Vagina (tissue), 2 donors: ENCODE measurements at regions of chr15 and their contacts with region 1.

Region 1: GRCh38 chr15:59372352-59373211 is at the start of gene MYO1E:
- DNase-seq: peak in 1 of 2 donors; percentile 98
- H3K4me3 ChIP-seq: peak within 1 kb of the TSS; percentile 60 to 88
- H3K27ac ChIP-seq: peak within 1 kb of the TSS; percentile 96
- H3K4me1 ChIP-seq: peaks cover 34% of the 10 kb centered on the region
- H3K27me3 ChIP-seq: no peaks in the 10 kb centered on the region
- CTCF ChIP-seq: no peak
- POLR2A ChIP-seq: peak; percentile 55 to 59
- total RNA-seq, gene MYO1E: 16.9 TPM

Region 2: DNA sequence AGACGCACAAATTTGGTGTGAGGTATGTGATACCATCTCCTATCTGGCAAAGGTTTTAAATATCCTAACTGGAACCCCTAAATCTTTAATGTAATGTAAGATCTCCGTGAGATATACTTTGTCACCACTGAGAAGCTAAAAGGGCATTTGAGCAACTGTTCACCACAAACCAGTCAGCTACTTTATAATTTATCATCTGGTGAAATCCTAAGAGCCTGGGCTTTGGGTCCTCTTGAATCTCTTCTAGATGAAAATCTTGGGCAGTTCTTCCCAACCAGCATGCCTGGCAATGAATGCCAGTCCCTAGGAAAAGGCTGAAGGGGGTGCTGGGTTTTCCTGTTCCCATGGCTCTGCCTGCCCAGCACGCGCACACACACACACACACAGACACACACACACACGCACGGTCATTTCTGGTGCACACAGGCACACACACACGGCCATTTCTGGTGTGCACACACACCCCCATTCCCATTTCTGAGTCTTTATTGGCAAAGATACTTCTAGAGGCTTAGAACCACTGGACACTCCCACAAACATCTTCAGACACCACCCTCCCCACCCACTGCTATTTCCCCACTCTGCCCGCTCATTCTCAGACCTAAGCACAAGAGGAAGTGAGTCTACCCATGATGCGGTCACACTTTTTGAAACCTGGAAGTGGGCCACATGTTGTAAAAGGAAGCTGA is 72.5 kb before region 1 on chr15:
- intact Hi-C with region 1: loop called (anchors 10 kb)
- DNase-seq: peak in 1 of 2 donors; percentile 92
- H3K4me3 ChIP-seq: no peak overlapping the region
- H3K27ac ChIP-seq: peak overlapping the region; percentile 56
- H3K4me1 ChIP-seq: peaks cover 43% of the 10 kb centered on the region
- H3K27me3 ChIP-seq: no peaks in the 10 kb centered on the region
- CTCF ChIP-seq: no peak
- POLR2A ChIP-seq: no peak